ENCODE measurements at regions of chr11 and their contacts with region 1.

Region 1: DNA sequence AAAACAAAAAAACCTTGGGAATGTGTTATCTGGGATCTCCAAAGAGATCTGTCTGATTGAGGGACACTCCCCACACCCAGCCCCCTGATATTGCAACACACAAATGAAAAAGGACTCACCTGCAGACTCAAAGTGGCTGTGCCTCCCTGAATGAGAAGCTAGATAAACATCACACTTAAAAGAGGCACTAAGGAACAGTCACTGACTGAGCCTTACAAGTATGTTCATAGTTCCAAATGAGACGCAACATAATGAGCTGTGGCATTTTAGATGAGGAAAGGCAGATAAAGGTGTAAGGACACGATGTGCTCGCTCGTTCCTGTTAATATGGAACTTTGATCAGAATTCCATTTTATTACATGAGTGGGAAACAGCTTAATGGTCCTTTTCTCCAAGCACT is 21.0 kb upstream of the CFAP300 start:
- DNase-seq: no peak
- ATAC-seq: no peak
- H3K4me3 ChIP-seq: no peak overlapping the region
- H3K27ac ChIP-seq: no peak overlapping the region
- H3K4me1 ChIP-seq: peaks cover 12% of the 10 kb centered on the region
- H3K27me3 ChIP-seq: no peaks in the 10 kb centered on the region
- CTCF ChIP-seq: no peak
- EP300 ChIP-seq: no peak
- POLR2A ChIP-seq: no peak
- RAD21 ChIP-seq: no peak

Region 2: GRCh38 chr11:103024086-103024485 is 997.9 kb after region 1 on chr11:
- CTCF ChIA-PET with region 1: no interaction called
- POLR2A ChIA-PET with region 1: no interaction called
- in situ Hi-C with region 1: no loop called
- intact Hi-C with region 1: loop called (anchors 5 kb)
- DNase-seq: no peak
- ATAC-seq: no peak
- H3K4me3 ChIP-seq: no peak overlapping the region
- H3K27ac ChIP-seq: no peak overlapping the region
- H3K4me1 ChIP-seq: no peaks in the 10 kb centered on the region
- H3K27me3 ChIP-seq: no peaks in the 10 kb centered on the region
- CTCF ChIP-seq: no peak
- EP300 ChIP-seq: no peak
- POLR2A ChIP-seq: no peak
- RAD21 ChIP-seq: no peak

Measured in HepG2 (cell line).